PC-9 (cell line): ENCODE measurements at regions of chr7 and their contacts with region 1.

Region 1: DNA sequence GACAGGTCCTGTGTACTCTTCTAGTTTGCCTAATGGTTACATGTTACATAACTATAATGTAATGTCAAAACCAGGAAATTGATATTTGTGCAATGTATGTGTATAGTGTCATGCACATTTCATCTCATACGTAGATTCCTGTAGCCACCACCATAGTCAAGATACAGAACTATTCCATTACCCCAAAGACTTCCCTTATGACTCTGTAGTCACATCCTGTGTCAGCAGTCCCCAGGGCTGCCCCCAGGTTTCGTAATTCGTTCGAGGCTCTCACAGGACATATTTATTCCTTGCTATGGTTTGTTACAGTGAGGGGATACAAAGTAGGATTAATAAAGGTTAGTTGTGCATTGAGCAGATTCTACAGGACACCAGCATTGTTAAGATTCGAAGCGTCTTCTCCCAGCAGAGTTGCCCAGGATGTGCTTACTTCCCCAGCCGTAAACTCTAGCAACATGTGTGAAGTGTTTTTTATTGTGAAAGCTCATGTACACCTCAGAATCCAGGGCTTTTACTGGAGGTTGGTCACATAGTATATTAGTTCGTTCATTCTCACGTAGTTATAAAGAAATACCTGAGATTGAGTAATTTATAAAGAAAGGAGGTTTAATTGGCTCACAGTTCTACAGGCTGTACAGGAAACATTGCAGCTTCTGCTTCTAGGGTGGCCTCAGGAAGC is 18.6 kb downstream of the RABGEF1 start:
- DNase-seq: no peak
- H3K4me3 ChIP-seq: no peak overlapping the region
- H3K27ac ChIP-seq: no peak overlapping the region
- H3K4me1 ChIP-seq: no peaks in the 10 kb centered on the region
- H3K27me3 ChIP-seq: no peaks in the 10 kb centered on the region
- CTCF ChIP-seq: no peak

Region 2: DNA sequence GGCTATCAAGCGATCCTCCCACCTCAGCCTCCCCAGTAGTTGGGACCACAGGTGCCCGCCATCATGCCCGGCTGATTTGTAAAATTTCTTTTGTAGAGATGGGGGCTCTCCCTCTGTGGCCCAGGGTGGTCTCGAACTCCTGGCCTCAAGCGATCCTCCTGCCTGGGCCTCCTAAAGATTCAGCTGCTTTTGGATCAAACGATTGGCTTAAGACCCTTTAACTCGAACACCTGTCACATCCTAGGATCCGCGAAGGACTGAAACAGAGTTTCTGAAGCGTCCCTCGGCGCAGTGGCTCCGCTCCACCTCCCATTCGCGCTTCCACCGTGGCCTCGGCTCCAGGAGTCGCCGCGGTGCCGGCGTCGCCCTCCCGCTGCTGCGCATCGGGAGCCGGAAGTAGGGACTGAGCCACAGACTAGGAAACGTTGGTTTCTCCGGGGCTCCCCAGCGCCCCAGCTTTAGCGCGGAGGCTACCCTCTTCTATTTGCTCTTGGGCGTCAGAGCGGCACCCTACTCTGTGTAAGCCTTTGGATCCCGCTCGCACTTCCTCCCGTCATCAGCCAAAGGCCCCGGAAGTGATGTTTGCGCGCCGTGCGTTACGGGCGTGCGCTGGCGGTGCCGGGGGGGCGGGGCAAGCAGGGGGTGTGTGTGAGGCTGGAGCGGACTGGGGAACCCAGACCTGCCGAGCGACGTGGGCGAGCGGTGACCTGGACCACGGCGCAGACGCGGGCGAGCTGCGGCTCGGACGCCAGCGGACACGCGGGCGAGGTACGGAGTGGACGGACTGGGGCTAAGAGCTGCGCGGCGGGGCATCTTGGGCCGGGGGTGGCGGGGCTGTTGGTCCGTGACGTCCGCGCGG is 77.4 kb before region 1 on chr7:
- CTCF ChIA-PET with region 1: no interaction called
- POLR2A ChIA-PET with region 1: no interaction called
- intact Hi-C with region 1: no loop called
- DNase-seq: peak; percentile 91 to 96
- H3K4me3 ChIP-seq: peak overlapping the region; percentile 89
- H3K27ac ChIP-seq: peak overlapping the region; percentile 77
- H3K4me1 ChIP-seq: peaks cover 11% of the 10 kb centered on the region
- H3K27me3 ChIP-seq: no peaks in the 10 kb centered on the region
- CTCF ChIP-seq: no peak

Region 3: DNA sequence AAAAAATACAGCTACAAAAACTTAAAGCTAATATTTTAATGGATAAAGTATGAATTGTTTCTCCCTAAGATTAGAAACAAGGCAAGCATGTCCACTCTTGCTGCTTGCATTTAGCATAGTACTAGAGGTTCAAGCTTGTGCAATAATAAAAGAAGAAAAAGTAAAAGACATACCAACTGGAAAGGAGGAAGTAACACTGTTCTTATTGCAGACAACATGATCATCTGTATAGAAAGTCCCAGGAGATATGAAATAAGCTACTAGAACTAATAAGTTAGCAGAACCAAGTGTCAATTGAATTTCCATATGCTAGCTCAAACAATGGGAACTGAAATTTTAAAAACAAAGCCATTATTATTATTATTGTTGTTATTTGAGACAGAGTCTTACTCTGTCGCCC is 38.5 kb before region 1 on chr7:
- CTCF ChIA-PET with region 1: no interaction called
- POLR2A ChIA-PET with region 1: no interaction called
- intact Hi-C with region 1: loop called (anchors 2 kb)
- DNase-seq: no peak
- H3K4me3 ChIP-seq: no peak overlapping the region
- H3K27ac ChIP-seq: no peak overlapping the region
- H3K4me1 ChIP-seq: no peaks in the 10 kb centered on the region
- H3K27me3 ChIP-seq: no peaks in the 10 kb centered on the region
- CTCF ChIP-seq: no peak